A549 (cell line): ENCODE measurements at regions of chr2 and their contacts with region 1.

Region 1: DNA sequence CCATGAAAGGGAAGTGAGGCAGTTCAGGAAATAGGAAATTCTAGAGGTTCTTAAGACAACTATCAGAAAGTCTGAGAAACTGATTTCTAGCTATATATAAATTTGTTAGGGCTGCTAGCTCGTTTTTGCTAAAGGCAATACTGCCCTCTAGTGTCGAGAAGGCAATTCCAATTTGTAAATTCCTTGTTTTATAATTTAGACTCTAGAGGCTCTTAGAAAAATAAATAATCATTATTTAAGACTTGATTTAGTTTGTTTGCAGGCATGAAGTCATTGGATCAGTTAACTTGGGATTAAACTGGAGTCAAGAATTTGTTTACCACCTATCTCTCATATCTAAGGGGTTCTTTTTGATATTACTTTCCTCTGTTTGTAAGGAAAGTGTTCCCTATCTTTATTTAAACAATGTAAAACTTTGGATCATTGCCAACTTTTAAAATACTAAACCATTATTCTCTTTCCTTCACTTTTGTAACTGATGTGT is 66.2 kb downstream of the ACVR2A start:
- DNase-seq: peak in 1 of 2 experiments; percentile 61
- ATAC-seq: peak; percentile 56 to 68; a peak in 4 of 6 replicates
- H3K4me3 ChIP-seq: no peak overlapping the region
- H3K27ac ChIP-seq: no peak overlapping the region
- H3K4me1 ChIP-seq: 0 out of 3 replicates have a peak, but pooled peaks cover 4% of the 10 kb centered on the region
- CTCF ChIP-seq: peak; percentile 90
- EP300 ChIP-seq: no peak
- POLR2A ChIP-seq: no peak
- RAD21 ChIP-seq: peak; percentile 88 to 90

Region 2: DNA sequence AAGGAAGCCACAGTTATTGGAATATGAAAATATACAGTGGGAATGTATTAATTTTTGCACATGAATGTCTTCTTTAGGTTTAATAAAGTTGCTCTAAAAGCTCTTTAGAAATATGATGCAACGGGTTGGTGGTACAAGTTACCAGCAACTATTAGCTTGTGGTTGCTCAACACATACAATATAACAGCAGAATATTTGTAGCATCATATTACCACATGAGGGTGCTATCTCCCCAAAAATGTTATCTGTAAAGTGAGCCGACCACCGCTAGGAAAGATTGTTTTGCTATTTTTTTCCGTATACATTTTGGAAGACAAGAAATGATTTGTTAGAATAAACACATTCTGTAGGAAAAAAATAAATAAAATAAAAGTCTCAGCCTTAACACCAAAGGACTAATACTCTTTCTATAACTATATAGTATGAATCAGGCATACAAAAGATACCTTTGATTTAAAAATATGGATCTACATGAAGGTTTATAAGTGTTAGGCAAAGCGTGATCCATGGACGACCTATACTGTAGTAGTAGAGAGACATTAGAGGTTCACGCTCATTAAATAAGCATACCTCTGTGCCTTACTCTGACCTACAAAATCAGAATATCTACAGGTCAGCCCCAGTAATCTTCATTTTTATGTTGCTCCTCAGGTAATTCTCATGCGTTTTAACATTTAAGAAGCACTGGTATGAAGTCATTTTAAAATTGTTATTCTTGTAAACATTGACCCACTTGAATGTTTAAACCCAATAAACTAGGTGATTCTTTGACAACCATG is 1176.8 kb before region 1 on chr2:
- CTCF ChIA-PET with region 1: interaction called, 10 read pairs
- POLR2A ChIA-PET with region 1: no interaction called
- DNase-seq: peak; percentile 12 to 52
- ATAC-seq: peak; percentile 90 to 91; a peak in 5 of 6 replicates
- H3K4me3 ChIP-seq: no peak overlapping the region
- H3K27ac ChIP-seq: no peak overlapping the region
- H3K4me1 ChIP-seq: no peaks in the 10 kb centered on the region
- CTCF ChIP-seq: peak; percentile 65
- EP300 ChIP-seq: no peak
- POLR2A ChIP-seq: no peak
- RAD21 ChIP-seq: peak; percentile 70 to 79

Region 3: GRCh38 chr2:147045113-147045512 is 865.9 kb before region 1 on chr2:
- CTCF ChIA-PET with region 1: interaction called, 11 read pairs
- POLR2A ChIA-PET with region 1: no interaction called
- DNase-seq: peak in 1 of 2 experiments; percentile 24
- ATAC-seq: peak in 1 of 2 experiments; percentile 61; a peak in 2 of 6 replicates
- H3K4me3 ChIP-seq: no peak overlapping the region
- H3K27ac ChIP-seq: no peak overlapping the region
- H3K4me1 ChIP-seq: no peaks in the 10 kb centered on the region
- CTCF ChIP-seq: peak; percentile 47; the same call in 2 of the 3 replicates
- EP300 ChIP-seq: no peak
- POLR2A ChIP-seq: no peak
- RAD21 ChIP-seq: peak; percentile 36 to 50; a peak in 3 of 5 replicates

Region 4: DNA sequence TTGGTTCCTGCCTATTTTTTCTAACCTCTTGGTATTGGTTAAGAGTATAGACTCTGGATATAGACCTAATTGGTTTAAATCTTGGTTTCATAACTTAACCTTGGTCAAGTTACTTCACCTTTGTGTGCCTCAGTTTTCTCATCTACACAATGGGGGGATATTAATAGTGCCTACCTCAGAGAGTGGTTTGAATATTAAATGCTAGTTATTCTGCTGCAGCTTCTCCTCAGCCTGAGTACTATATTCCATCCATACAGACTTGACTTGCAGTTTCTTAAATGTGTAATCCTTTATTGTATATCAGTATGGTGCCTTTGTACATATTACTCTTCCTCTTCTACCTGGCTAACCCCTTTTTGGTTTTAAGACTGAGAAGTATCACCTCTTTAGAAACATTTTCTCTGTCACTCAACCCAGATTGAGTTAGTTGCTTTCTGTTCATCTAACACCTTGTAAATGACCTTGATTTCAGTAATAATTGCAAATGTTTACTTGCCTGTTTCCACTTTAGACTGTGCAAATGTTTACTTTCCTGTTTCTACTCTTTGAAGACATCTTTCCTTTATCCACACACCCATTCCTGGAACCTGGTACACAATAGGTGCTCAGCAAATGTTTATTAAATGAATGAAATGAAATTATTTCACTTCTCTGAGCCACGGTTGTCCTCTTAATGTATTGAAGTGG is 59.6 kb before region 1 on chr2:
- CTCF ChIA-PET with region 1: no interaction called
- POLR2A ChIA-PET with region 1: no interaction called
- DNase-seq: no peak
- ATAC-seq: no peak
- H3K4me3 ChIP-seq: no peak overlapping the region
- H3K27ac ChIP-seq: no peak overlapping the region
- H3K4me1 ChIP-seq: peaks cover 6% of the 10 kb centered on the region; the same call in 1 of the 3 replicates
- CTCF ChIP-seq: no peak
- EP300 ChIP-seq: no peak
- POLR2A ChIP-seq: no peak
- RAD21 ChIP-seq: no peak

Region 5: GRCh38 chr2:148161909-148162435 is 250.9 kb after region 1 on chr2:
- CTCF ChIA-PET with region 1: no interaction called
- POLR2A ChIA-PET with region 1: no interaction called
- DNase-seq: no peak
- ATAC-seq: no peak
- H3K4me3 ChIP-seq: no peak overlapping the region
- H3K27ac ChIP-seq: no peak overlapping the region
- H3K4me1 ChIP-seq: no peaks in the 10 kb centered on the region
- CTCF ChIP-seq: no peak
- EP300 ChIP-seq: no peak
- POLR2A ChIP-seq: no peak
- RAD21 ChIP-seq: no peak

Region 6: GRCh38 chr2:148634749-148635148 is 723.7 kb after region 1 on chr2:
- CTCF ChIA-PET with region 1: no interaction called
- POLR2A ChIA-PET with region 1: no interaction called
- DNase-seq: no peak
- ATAC-seq: no peak; a peak in 1 of 6 replicates
- H3K4me3 ChIP-seq: no peak overlapping the region
- H3K27ac ChIP-seq: no peak overlapping the region
- H3K4me1 ChIP-seq: no peaks in the 10 kb centered on the region
- CTCF ChIP-seq: no peak
- EP300 ChIP-seq: no peak
- POLR2A ChIP-seq: no peak
- RAD21 ChIP-seq: no peak